ENCODE measurements at regions of chr3 and their contacts with region 1.

Region 1: GRCh38 chr3:46098319-46098761 is 71.1 kb upstream of the XCR1 start:
- DNase-seq: peak; percentile 76
- ATAC-seq: peak; percentile 54
- H3K4me3 Mint-ChIP-seq: peak overlapping the region; percentile 10
- H3K27ac Mint-ChIP-seq: peak overlapping the region; percentile 87
- H3K4me1 Mint-ChIP-seq: peaks cover 41% of the 10 kb centered on the region
- H3K27me3 Mint-ChIP-seq: peaks cover 25% of the 10 kb centered on the region
- CTCF ChIP-seq: no peak

Region 2: GRCh38 chr3:46068501-46068900 is 29.8 kb before region 1 on chr3:
- CTCF ChIA-PET with region 1: no interaction called
- POLR2A ChIA-PET with region 1: no interaction called
- intact Hi-C with region 1: no loop called
- DNase-seq: no peak
- ATAC-seq: no peak
- H3K4me3 Mint-ChIP-seq: peak overlapping the region; percentile 40
- H3K27ac Mint-ChIP-seq: peak overlapping the region; percentile 50
- H3K4me1 Mint-ChIP-seq: peaks cover 70% of the 10 kb centered on the region
- H3K27me3 Mint-ChIP-seq: peaks cover 9% of the 10 kb centered on the region
- CTCF ChIP-seq: no peak

Region 3: GRCh38 chr3:46208167-46208704 is 109.9 kb after region 1 on chr3 and contains the start of gene CCR1:
- CTCF ChIA-PET with region 1: interaction called, 10 read pairs
- POLR2A ChIA-PET with region 1: interaction called, 3 read pairs
- intact Hi-C with region 1: loop called (anchors 5 kb)
- DNase-seq: peak; percentile 92
- ATAC-seq: peak; percentile 78
- H3K4me3 Mint-ChIP-seq: peak within 1 kb of the TSS; percentile 34
- H3K27ac Mint-ChIP-seq: peak within 1 kb of the TSS; percentile 55
- H3K4me1 Mint-ChIP-seq: peaks cover 22% of the 10 kb centered on the region
- H3K27me3 Mint-ChIP-seq: no peaks in the 10 kb centered on the region
- CTCF ChIP-seq: no peak
- total RNA-seq, gene CCR1: 0.67 to 1.1 TPM

Region 4: GRCh38 chr3:46214751-46215352 is 116.5 kb after region 1 on chr3:
- CTCF ChIA-PET with region 1: interaction called, 10 read pairs
- POLR2A ChIA-PET with region 1: interaction called, 3 read pairs
- intact Hi-C with region 1: no loop called
- DNase-seq: peak; percentile 51
- ATAC-seq: no peak
- H3K4me3 Mint-ChIP-seq: no peak overlapping the region
- H3K27ac Mint-ChIP-seq: no peak overlapping the region
- H3K4me1 Mint-ChIP-seq: peaks cover 4% of the 10 kb centered on the region
- H3K27me3 Mint-ChIP-seq: no peaks in the 10 kb centered on the region
- CTCF ChIP-seq: peak; percentile 15